ENCODE measurements at regions of chr16 and their contacts with region 1.

Region 1: GRCh38 chr16:20298455-20298854 is 28.9 kb downstream of the GP2 start:
- DNase-seq: no peak
- H3K4me3 ChIP-seq: no peak overlapping the region
- H3K27ac ChIP-seq: no peak overlapping the region
- H3K4me1 ChIP-seq: no peaks in the 10 kb centered on the region
- H3K27me3 ChIP-seq: peaks cover 0 to 22% (median 0%) of the 10 kb centered on the region in 4 donors
- CTCF ChIP-seq: no peak
- EP300 ChIP-seq: no peak
- POLR2A ChIP-seq: no peak

Region 2: GRCh38 chr16:19907161-19907992 is 391.1 kb before region 1 on chr16:
- intact Hi-C with region 1: loop called (anchors 5 kb)
- DNase-seq: no peak
- H3K4me3 ChIP-seq: peak overlapping the region in 2 of 4 donors; percentile 12 to 35
- H3K27ac ChIP-seq: no peak overlapping the region
- H3K4me1 ChIP-seq: peaks cover 0 to 10% (median 8%) of the 10 kb centered on the region in 4 donors
- H3K27me3 ChIP-seq: peaks cover 0 to 24% (median 6%) of the 10 kb centered on the region in 4 donors
- CTCF ChIP-seq: peak; percentile 82 to 96 (median 88)
- EP300 ChIP-seq: no peak
- POLR2A ChIP-seq: no peak

Region 3: GRCh38 chr16:20023190-20023589 is 275.3 kb before region 1 on chr16:
- intact Hi-C with region 1: no loop called
- DNase-seq: no peak
- H3K4me3 ChIP-seq: no peak overlapping the region
- H3K27ac ChIP-seq: no peak overlapping the region
- H3K4me1 ChIP-seq: no peaks in the 10 kb centered on the region
- H3K27me3 ChIP-seq: no peaks in the 10 kb centered on the region
- CTCF ChIP-seq: no peak
- EP300 ChIP-seq: no peak
- POLR2A ChIP-seq: no peak

Region 4: GRCh38 chr16:20348365-20349185 is 50.1 kb after region 1 on chr16:
- intact Hi-C with region 1: no loop called
- DNase-seq: no peak
- H3K4me3 ChIP-seq: no peak overlapping the region
- H3K27ac ChIP-seq: no peak overlapping the region
- H3K4me1 ChIP-seq: peaks cover 0 to 4% (median 0%) of the 10 kb centered on the region in 4 donors
- H3K27me3 ChIP-seq: peaks cover 0 to 40% (median 0%) of the 10 kb centered on the region in 4 donors
- CTCF ChIP-seq: peak in 1 of 3 experiments; percentile 12
- EP300 ChIP-seq: no peak
- POLR2A ChIP-seq: no peak

Region 5: DNA sequence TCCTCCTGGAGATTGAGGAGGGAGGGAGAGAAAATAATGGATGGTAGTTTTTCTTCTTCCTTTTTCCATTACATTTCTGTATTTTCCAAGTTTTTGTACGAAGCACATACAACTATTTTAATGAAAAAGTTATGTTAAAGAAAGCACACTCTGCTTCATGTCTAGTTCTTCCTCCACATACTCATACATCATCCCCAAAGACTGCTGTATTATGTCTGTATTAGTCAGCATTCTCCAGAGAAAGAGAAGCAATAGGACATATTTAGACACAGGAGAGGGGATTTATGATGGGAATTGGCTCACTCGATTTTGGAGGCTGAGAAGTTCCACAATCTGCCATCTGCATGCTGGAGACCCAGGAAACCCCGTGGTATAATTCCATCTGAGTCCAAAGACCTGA is 142.7 kb after region 1 on chr16:
- intact Hi-C with region 1: no loop called
- DNase-seq: no peak
- H3K4me3 ChIP-seq: no peak overlapping the region
- H3K27ac ChIP-seq: peak overlapping the region; percentile 73 to 81 (median 76)
- H3K4me1 ChIP-seq: peaks cover 0 to 33% (median 13%) of the 10 kb centered on the region in 4 donors
- H3K27me3 ChIP-seq: no peaks in the 10 kb centered on the region
- CTCF ChIP-seq: no peak
- EP300 ChIP-seq: no peak
- POLR2A ChIP-seq: no peak

Region 6: GRCh38 chr16:20484726-20485125 is 186.3 kb after region 1 on chr16:
- intact Hi-C with region 1: no loop called
- DNase-seq: no peak
- H3K4me3 ChIP-seq: no peak overlapping the region
- H3K27ac ChIP-seq: no peak overlapping the region
- H3K4me1 ChIP-seq: no peaks in the 10 kb centered on the region
- H3K27me3 ChIP-seq: no peaks in the 10 kb centered on the region
- CTCF ChIP-seq: no peak
- EP300 ChIP-seq: no peak
- POLR2A ChIP-seq: no peak